Prostate gland (tissue), 2 donors: ENCODE measurements at regions of chr5 and their contacts with region 1.

Region 1: DNA sequence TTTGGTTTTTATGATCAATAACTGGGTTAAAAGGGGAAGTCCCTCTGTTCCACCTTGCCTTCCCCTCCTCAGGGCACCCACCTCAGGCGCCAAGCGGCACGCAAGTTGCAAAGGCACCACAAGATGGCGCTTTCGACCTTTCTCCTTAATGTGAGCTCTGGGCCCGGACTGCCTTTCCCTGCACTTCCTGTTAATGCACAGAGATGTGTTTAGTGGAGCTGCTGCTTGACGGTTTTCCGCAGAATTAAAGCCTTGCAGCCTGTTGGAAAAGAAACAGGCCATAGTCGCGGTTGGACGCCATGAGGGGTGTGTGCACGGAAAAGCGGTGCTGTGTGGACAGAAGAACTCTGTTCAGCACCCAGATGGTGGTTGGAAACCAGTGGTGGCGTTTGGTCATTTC is 17.9 kb downstream of the CXCL14 start:
- DNase-seq: peak; percentile 69
- H3K4me3 ChIP-seq: no peak overlapping the region
- H3K27ac ChIP-seq: no peak overlapping the region
- H3K4me1 ChIP-seq: no peaks in the 10 kb centered on the region
- H3K27me3 ChIP-seq: peaks cover 2% of the 10 kb centered on the region
- CTCF ChIP-seq: peak; percentile 40 to 83 (median 81)
- POLR2A ChIP-seq: no peak

Region 2: DNA sequence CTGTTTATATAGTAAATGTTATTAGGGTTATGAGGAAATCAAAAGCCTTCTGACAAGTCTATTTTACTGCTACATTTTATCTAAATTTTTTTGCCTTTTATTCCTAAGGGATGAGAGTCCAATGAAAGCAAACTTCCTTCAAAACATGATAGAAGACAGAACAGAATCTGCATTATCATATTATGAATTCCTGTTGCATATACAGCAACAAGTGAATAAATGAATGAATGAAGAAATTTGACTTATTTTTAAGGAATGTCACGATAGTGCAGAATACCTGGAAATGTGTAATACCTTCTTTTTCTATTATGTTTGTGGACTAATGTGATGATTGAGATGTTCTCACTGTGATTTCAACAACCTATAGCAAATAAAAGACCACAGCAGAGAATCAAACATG is 836.0 kb before region 1 on chr5:
- intact Hi-C with region 1: no loop called
- DNase-seq: no peak
- H3K4me3 ChIP-seq: no peak overlapping the region
- H3K27ac ChIP-seq: no peak overlapping the region
- H3K4me1 ChIP-seq: no peaks in the 10 kb centered on the region
- H3K27me3 ChIP-seq: no peaks in the 10 kb centered on the region
- CTCF ChIP-seq: no peak
- POLR2A ChIP-seq: no peak

Region 3: DNA sequence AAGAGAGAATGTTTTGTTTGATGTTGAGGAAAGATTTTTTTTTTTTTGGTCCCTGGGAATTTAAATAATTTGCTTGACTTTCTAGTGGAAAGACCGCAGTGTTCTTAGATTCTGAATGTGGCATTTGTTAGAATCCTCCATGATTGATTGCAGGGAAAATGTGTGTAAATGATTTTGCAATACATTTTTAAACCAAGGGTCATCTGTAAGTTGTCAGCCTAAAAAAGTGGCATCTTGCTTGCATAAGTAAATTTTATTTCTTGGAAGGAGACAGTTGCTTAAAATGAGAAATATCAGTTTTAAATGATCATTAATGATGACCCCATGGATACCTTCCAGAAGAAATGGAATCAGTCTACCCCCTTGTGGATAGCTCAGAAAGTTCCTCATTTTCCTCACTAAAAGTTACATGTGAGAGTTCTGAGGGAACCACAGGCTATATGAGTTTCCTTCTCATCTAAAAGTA is 168.5 kb after region 1 on chr5:
- intact Hi-C with region 1: loop called (anchors 5 kb)
- DNase-seq: no peak
- H3K4me3 ChIP-seq: no peak overlapping the region
- H3K27ac ChIP-seq: no peak overlapping the region
- H3K4me1 ChIP-seq: no peaks in the 10 kb centered on the region
- H3K27me3 ChIP-seq: no peaks in the 10 kb centered on the region
- CTCF ChIP-seq: peak in 2 of 4 experiments; percentile 24 to 42
- POLR2A ChIP-seq: no peak

Region 4: GRCh38 chr5:135829681-135830383 is 269.0 kb after region 1 on chr5:
- intact Hi-C with region 1: loop called (anchors 1 kb)
- DNase-seq: peak; percentile 71
- H3K4me3 ChIP-seq: no peak overlapping the region
- H3K27ac ChIP-seq: no peak overlapping the region
- H3K4me1 ChIP-seq: no peaks in the 10 kb centered on the region
- H3K27me3 ChIP-seq: peaks cover 3% of the 10 kb centered on the region
- CTCF ChIP-seq: peak; percentile 42 to 77 (median 74)
- POLR2A ChIP-seq: no peak

Region 5: GRCh38 chr5:136212252-136212721 is 651.4 kb after region 1 on chr5:
- intact Hi-C with region 1: loop called (anchors 10 kb)
- DNase-seq: peak; percentile 26
- H3K4me3 ChIP-seq: no peak overlapping the region
- H3K27ac ChIP-seq: no peak overlapping the region
- H3K4me1 ChIP-seq: no peaks in the 10 kb centered on the region
- H3K27me3 ChIP-seq: no peaks in the 10 kb centered on the region
- CTCF ChIP-seq: peak; percentile 71 to 89 (median 80)
- POLR2A ChIP-seq: no peak